Activated T-helper 2 cell treated with anti-CD3 and anti-CD28 coated beads, Interferon-gamma antibody, Interleukin-2, Interleukin-4, amounts not matched to agents 10 μg/mL and 5 μg/mL and 100 μg/mL, durations not matched to agents 14 hours and 24 hours and 36 hours (primary cell): ENCODE measurements at regions of chr2 and their contacts with region 1.

Region 1: DNA sequence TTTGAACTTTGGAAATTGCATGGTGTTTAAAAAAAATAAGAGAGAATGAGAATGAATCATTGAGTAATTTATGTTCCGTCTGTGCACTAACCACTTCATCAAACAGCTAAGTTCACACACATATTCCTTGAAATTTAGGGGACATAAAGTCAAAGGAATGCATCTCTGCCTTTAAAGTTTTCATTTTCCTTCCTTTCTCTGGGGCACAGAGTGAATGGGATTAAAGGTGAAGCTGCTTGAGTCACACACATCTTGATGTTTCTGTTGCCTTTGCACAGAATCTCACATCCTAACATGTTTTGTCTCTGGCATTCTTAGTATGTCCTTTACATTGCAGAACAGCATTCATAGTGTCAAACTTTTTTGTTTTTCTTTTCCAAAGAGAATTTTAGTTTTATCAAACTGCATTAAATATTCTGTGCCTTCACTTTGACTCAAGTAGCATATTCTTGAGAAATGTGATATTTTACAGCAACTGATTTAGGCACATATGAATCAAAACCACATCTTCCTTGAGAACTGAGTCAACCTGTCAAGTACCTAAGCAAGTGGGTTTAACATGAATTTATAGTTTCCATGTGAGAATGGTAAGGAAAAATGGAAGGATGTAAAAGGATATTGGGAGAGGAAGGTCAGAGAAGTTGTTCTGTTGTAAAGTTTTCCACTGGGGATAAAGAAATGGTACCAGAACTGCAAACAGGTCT is 169.1 kb upstream of the THUMPD2 start:
- DNase-seq: no peak
- H3K4me3 Mint-ChIP-seq: peak overlapping the region; percentile 5
- H3K27ac Mint-ChIP-seq: peak overlapping the region; percentile 93
- H3K4me1 Mint-ChIP-seq: peaks cover 54% of the 10 kb centered on the region
- H3K27me3 Mint-ChIP-seq: no peaks in the 10 kb centered on the region

Region 2: GRCh38 chr2:39608686-39609441 is 339.3 kb before region 1 on chr2:
- intact Hi-C with region 1: no loop called
- DNase-seq: no peak
- H3K4me3 Mint-ChIP-seq: no peak overlapping the region
- H3K27ac Mint-ChIP-seq: no peak overlapping the region
- H3K4me1 Mint-ChIP-seq: peaks cover 5% of the 10 kb centered on the region
- H3K27me3 Mint-ChIP-seq: peaks cover 26% of the 10 kb centered on the region

Region 3: DNA sequence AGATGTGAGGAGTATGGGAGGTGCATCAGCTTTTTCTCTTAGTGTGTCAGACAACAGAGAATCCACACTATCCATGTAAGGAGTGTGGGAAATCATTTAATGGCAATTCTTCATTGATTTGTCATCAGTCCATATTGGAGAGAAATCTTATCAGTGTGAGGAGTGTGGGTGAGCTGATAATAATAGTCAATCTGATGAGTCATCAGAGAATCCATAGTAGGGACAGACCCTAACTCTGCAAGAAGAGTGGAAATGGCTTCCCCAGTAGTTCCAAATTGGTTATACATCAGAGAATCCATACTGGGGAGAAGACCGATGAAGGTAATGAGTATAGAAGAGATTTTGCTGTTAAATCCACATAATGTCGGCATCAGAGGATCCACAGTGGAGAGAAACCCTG is 18.6 kb before region 1 on chr2:
- intact Hi-C with region 1: loop called (anchors 1 kb)
- DNase-seq: no peak
- H3K4me3 Mint-ChIP-seq: no peak overlapping the region
- H3K27ac Mint-ChIP-seq: no peak overlapping the region
- H3K4me1 Mint-ChIP-seq: peaks cover 45% of the 10 kb centered on the region
- H3K27me3 Mint-ChIP-seq: no peaks in the 10 kb centered on the region

Region 4: GRCh38 chr2:40032650-40033319 is 84.6 kb after region 1 on chr2:
- intact Hi-C with region 1: loop called (anchors 1 kb)
- DNase-seq: no peak
- H3K4me3 Mint-ChIP-seq: no peak overlapping the region
- H3K27ac Mint-ChIP-seq: peak overlapping the region; percentile 75
- H3K4me1 Mint-ChIP-seq: peaks cover 45% of the 10 kb centered on the region
- H3K27me3 Mint-ChIP-seq: no peaks in the 10 kb centered on the region

Region 5: DNA sequence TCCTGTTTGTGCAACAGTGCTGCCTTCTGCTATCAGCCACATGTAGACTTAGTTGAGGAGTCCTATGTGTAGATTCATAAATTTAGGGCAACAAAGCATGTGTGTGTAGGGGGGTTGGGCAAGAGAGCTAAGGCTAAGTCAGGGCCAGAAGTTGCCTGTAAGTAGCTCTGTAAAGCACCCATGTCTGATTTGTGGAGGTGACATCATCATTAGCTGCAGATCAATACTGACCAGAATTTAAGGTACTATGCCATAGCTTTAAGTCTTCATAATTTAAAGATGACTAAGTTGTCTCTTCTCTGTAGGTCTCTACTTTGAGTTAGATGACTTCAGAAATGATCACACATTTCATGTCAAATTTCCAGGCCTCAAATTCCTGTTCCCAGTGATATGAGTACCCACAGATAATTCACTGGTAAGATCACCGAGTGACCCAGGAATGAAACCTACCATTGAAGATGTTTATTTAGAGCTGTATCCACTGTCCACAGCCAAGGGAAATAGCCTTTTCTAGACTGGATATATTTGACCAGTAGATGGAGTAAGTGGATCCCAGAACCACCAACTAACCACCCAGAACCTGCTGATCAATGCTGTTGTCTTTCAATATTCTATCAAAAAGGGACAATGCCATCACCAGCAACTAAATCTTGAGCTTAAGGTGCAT is 264.8 kb after region 1 on chr2:
- intact Hi-C with region 1: loop called (anchors 1 kb)
- DNase-seq: no peak
- H3K4me3 Mint-ChIP-seq: no peak overlapping the region
- H3K27ac Mint-ChIP-seq: no peak overlapping the region
- H3K4me1 Mint-ChIP-seq: peaks cover 29% of the 10 kb centered on the region
- H3K27me3 Mint-ChIP-seq: no peaks in the 10 kb centered on the region